SK-N-SH (cell line): ENCODE measurements at regions of chr6 and their contacts with region 1.

Region 1: DNA sequence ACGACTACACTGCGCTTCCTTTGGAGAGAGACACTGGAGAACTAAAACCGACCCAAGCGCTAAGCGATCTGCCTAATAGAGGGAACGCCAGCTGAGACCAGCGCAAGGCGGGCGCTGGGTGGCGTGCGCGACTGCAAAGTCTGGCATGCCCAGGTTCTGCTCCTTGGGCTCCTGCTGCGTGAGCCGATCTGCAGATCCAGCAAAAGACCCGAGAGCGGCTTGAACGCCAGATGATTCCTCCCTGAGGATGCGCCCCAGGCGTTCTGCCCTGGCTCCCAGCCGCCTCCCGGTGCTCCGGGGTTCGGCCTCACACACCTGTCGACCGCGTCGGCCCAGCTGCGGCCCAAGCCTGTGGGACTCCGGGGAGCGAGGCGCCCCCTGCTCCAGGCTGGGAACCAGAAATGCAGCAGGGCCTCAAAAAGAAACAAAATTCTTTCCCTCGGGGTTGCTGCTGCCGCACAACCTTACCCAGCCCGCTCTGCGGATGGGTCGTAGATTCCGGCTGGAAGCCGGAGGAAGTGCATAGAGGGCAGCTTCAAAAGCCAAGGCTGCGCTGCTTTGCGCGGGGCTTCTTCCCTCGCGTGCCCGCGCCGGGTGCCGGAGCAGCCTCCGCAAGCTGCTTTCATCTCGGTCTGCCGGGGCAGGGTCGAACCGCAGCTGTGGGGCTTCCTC is 17.9 kb upstream of the PRDM13 start:
- DNase-seq: peak; percentile 74
- H3K4me3 ChIP-seq: peak overlapping the region; percentile 47 to 61
- H3K27ac ChIP-seq: no peak overlapping the region
- H3K4me1 ChIP-seq: peaks cover 0 to 12% of the 10 kb centered on the region in 2 experiments; a peak in 1 of 4 replicates
- H3K27me3 ChIP-seq: peaks cover 43% of the 10 kb centered on the region
- CTCF ChIP-seq: peak; percentile 58
- EP300 ChIP-seq: no peak
- RAD21 ChIP-seq: peak; percentile 69

Region 2: DNA sequence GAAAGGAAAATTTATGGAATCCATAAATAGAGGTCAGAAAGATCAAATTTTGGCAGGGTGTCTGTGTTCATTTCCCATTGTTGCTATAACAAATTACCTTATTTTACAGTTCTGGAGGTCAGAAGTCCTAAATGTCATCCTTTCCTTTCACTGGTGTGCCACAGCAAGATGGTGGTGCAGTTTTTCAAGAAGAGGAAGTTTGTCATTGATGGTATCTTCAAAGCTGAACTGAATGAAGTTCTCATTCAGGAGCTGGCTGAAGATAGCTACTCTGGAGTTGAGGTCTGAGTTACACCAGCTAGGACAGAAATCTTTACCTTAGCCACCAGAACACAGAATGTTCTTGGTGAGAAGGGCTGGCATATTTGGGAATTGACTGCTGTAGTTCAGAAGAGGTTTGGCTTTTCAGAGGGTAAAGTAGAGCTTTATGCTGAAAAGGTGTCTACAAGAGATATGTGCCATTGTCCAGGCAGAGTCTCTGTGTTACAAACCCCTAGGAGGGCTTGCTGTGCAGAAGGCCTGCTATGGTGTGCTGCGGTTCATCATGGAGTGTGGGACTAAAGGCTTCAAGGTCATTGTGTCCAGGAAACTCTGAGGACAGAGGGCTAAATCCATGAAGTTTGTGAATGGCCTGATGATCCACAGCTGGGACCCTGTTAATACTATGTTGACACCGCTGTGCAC is 13.1 kb before region 1 on chr6:
- CTCF ChIA-PET with region 1: interaction called, 16 read pairs
- POLR2A ChIA-PET with region 1: no interaction called
- DNase-seq: no peak
- H3K4me3 ChIP-seq: no peak overlapping the region
- H3K27ac ChIP-seq: no peak overlapping the region
- H3K4me1 ChIP-seq: no peaks in the 10 kb centered on the region
- H3K27me3 ChIP-seq: no peaks in the 10 kb centered on the region
- CTCF ChIP-seq: no peak
- EP300 ChIP-seq: no peak
- RAD21 ChIP-seq: no peak

Region 3: DNA sequence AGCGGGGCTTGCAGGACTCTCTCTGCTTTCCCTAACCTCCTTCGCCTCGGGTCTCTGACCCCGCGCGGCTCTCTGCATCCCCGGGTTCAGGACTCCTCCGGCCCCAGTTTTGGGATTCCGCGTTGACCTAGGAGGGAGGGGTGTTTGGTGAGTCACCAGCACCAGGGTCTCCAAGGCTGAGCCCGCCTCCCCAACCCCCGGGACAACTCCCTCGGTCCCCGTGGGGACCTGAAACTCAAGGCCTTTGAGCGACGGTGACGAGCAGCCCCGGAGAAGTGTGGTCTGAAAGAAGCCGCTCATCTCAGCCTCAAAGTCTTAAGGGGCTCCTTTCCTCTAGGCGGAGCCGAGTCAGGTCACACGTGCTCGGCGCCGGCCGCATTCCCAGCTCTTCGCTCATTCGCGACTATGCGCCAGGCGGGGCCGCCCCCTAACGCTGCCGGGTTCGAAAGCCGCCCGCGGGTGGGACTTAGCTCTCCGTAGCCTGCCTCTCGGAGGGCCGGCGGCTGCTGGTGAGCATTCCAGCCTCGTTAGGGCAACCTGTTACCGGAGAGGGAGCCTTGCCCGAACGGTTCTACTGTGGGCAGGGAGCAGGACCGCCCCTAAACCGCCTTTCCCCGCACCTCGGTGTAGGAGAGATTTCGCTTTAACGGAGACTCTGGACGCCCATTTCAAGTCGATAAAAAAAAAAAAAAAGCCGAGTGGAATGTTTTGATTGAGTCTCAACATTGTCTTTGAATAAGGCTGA is 14.8 kb after region 1 on chr6:
- CTCF ChIA-PET with region 1: interaction called, 18 read pairs
- POLR2A ChIA-PET with region 1: no interaction called
- DNase-seq: peak; percentile 65
- H3K4me3 ChIP-seq: peak overlapping the region; percentile 36 to 50
- H3K27ac ChIP-seq: no peak overlapping the region
- H3K4me1 ChIP-seq: peaks cover 5 to 8% of the 10 kb centered on the region in 2 experiments; a peak in 3 of 4 replicates
- H3K27me3 ChIP-seq: peaks cover 88% of the 10 kb centered on the region
- CTCF ChIP-seq: no peak
- EP300 ChIP-seq: no peak
- RAD21 ChIP-seq: no peak

Region 4: GRCh38 chr6:99613409-99613704 is 24.6 kb after region 1 on chr6:
- CTCF ChIA-PET with region 1: interaction called, 27 read pairs
- POLR2A ChIA-PET with region 1: no interaction called
- DNase-seq: peak; percentile 88
- H3K4me3 ChIP-seq: peak overlapping the region; percentile 33 to 47; a peak in 3 of 4 replicates
- H3K27ac ChIP-seq: no peak overlapping the region
- H3K4me1 ChIP-seq: peaks cover 0 to 10% of the 10 kb centered on the region in 2 experiments; a peak in 1 of 4 replicates
- H3K27me3 ChIP-seq: peaks cover 87% of the 10 kb centered on the region
- CTCF ChIP-seq: peak; percentile 46
- EP300 ChIP-seq: no peak
- RAD21 ChIP-seq: no peak

Region 5: DNA sequence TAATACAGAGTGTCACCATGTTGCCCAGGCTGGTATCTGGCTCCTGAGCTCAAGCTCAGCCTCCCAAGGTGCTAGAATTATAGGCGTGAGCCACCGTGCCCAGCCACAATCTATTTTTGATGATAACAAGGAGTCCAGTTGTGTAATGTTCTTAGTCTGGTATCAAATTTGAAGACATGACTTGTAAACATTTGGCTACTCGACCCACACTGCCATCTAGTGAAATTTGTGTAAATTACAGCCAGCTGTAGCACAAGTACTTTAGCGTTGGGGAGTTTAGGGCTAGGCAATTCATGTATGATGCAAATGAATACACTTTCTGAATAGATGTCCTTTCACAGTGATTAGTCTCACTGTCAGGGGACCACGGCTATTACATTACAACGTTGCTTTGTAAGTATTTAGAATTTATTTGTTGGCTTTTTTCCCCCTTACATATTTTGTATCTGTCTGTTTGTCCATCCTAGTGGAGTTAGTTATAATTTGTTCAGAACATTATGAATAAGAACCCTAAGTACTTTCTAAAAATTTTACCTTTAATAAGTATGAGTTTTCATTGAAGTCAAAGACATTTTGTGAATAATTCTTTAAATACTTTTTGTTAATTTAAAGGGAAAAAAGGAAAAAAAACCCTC is 157.6 kb after region 1 on chr6:
- CTCF ChIA-PET with region 1: interaction called, 35 read pairs
- POLR2A ChIA-PET with region 1: no interaction called
- DNase-seq: peak; percentile 39
- H3K4me3 ChIP-seq: no peak overlapping the region; a peak in 1 of 4 replicates
- H3K27ac ChIP-seq: no peak overlapping the region
- H3K4me1 ChIP-seq: no peaks in the 10 kb centered on the region
- H3K27me3 ChIP-seq: no peaks in the 10 kb centered on the region; the same call in 1 of the 2 replicates
- CTCF ChIP-seq: peak; percentile 85
- EP300 ChIP-seq: no peak
- RAD21 ChIP-seq: peak; percentile 76

Region 6: GRCh38 chr6:99761711-99762110 is 173.0 kb after region 1 on chr6:
- CTCF ChIA-PET with region 1: no interaction called
- POLR2A ChIA-PET with region 1: no interaction called
- DNase-seq: no peak
- H3K4me3 ChIP-seq: no peak overlapping the region
- H3K27ac ChIP-seq: no peak overlapping the region
- H3K4me1 ChIP-seq: no peaks in the 10 kb centered on the region
- H3K27me3 ChIP-seq: no peaks in the 10 kb centered on the region
- CTCF ChIP-seq: no peak
- EP300 ChIP-seq: no peak
- RAD21 ChIP-seq: no peak

Region 7: GRCh38 chr6:100057941-100058340 is 469.2 kb after region 1 on chr6:
- CTCF ChIA-PET with region 1: no interaction called
- POLR2A ChIA-PET with region 1: no interaction called
- DNase-seq: no peak
- H3K4me3 ChIP-seq: no peak overlapping the region
- H3K27ac ChIP-seq: no peak overlapping the region
- H3K4me1 ChIP-seq: no peaks in the 10 kb centered on the region
- H3K27me3 ChIP-seq: no peaks in the 10 kb centered on the region
- CTCF ChIP-seq: no peak
- EP300 ChIP-seq: no peak
- RAD21 ChIP-seq: no peak